ENCODE measurements at regions of chr11 and their contacts with region 1.

Region 1: DNA sequence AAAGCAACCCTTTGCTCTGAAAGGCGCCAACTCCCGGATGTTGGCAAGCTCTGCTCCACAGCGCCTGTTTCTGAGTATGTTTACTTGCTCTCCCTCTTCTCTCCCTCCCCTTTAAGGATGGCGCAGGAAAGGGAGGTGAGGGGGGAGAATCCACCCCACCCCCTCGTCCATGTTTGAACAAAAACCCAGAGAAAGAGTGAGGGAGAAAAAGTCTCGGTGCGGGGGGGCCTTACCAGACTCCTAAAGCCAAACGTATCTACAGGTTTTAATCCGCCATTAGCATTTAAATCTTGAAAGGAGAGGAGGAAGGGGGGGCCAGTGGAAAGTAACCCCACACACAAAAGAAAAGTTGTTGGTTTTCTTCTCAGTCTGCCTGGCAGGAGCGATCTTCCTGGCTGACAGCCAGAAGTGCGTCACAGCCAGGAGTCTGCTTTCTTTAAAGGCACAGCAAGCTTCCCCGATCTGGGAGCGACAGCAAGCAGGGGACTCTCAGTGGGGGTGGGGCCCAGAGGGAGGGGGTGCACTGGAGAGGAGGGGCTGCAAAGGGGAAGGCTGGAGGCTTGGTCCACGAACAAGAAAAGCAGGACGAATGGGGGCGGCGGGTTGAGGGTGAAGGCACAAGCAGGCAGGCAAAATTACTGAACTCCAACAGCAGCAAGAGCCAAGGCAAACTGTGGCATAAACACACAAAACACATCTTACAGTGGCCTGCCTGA is 39.5 kb downstream of the NUMA1 start:
- H3K4me3 Mint-ChIP-seq: no peak overlapping the region
- H3K27ac Mint-ChIP-seq: no peak overlapping the region
- H3K4me1 Mint-ChIP-seq: peaks cover 8% of the 10 kb centered on the region
- H3K27me3 Mint-ChIP-seq: no peaks in the 10 kb centered on the region

Region 2: DNA sequence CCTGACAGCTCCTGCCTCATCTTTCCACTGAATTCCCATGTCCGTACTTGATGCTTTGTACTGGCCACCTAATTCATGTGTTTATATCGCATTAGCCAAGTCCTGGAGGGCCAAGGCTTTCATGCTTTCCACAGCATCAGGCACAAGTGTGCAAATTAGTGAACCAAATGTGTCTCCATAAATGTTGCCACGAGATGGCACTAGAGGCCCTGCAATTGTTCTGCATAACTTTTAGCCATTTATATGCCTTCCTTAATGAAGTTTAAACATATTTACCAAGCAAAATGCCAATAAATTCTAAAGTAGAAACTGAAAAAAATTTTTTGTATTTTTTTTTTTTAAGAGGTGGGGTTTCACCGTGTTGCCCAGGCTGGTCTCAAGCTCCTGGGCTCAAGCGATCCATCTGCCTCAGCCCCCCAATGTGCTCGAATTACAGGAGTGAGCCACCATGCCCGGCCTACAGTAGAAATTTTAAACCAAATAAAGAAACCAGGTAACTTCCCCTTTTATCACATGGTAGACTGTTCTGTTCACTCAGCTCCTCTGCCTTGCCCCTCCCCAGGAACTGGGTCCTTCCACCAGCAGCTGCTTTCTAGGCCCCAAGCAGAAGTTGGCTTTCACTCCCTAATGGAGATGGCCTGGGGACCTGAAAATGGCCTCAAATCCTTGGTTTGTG is 63.0 kb before region 1 on chr11:
- intact Hi-C with region 1: no loop called
- H3K4me3 Mint-ChIP-seq: peak overlapping the region; percentile 17
- H3K27ac Mint-ChIP-seq: peak overlapping the region; percentile 91
- H3K4me1 Mint-ChIP-seq: peaks cover 37% of the 10 kb centered on the region
- H3K27me3 Mint-ChIP-seq: no peaks in the 10 kb centered on the region

Region 3: GRCh38 chr11:72075109-72075508 is 34.2 kb after region 1 on chr11:
- intact Hi-C with region 1: loop called (anchors 5 kb)
- H3K4me3 Mint-ChIP-seq: peak overlapping the region; percentile 74
- H3K27ac Mint-ChIP-seq: peak overlapping the region; percentile 90
- H3K4me1 Mint-ChIP-seq: peaks cover 77% of the 10 kb centered on the region
- H3K27me3 Mint-ChIP-seq: no peaks in the 10 kb centered on the region

Region 4: GRCh38 chr11:72091005-72091691 is 50.3 kb after region 1 on chr11:
- intact Hi-C with region 1: loop called (anchors 5 kb)
- H3K4me3 Mint-ChIP-seq: no peak overlapping the region
- H3K27ac Mint-ChIP-seq: peak overlapping the region; percentile 79
- H3K4me1 Mint-ChIP-seq: peaks cover 31% of the 10 kb centered on the region
- H3K27me3 Mint-ChIP-seq: no peaks in the 10 kb centered on the region

Measured in dendritic cell treated with granulocyte-macrophage colony-stimulating factor and Interleukin-4, amounts not matched to agents 40 ng/mL and 50 ng/mL, for 4 days (primary cell).